AG04450 (cell line): ENCODE measurements at regions of chr1 and their contacts with region 1.

Region 1: DNA sequence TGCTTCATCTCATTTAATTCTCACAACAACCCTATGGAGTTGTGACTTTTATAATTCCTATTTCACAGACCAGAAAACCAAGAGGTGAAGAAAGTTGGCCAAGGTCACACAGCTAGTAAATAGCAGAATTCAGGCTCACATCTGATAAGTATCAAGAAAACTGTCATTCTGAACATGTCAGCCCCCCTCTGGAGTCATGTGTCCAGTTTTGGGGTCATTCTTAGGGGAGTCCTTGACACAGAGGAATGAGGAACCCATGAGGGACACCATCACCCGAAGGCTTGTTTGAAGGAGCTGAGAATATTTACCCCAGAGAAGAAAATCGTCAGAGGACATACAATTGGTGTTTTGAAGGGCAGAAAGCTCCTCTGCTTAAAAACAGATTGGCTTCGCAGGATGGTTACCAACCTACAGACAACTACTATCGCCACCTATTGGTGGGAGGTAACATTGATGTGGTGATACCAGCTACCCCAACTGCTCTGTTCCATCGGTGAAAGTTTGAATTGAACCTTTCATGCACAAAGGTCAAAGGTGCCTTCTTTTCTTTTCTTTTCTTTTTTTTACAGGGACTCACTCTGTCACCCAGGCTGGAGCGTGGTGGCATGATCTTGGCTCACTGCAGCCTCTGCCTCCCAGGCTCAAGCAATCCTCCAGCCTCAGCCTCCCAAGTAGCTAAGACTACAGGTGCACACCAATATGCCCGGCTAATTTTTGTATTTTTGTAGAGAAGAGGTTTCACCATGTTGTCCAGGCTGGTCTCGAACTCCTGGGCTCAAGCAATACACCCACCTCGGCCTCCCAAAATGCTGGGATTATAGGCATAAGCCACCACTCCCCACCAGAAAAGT is 31.3 kb downstream of the NCMAP start:
- DNase-seq: peak; percentile 6
- H3K4me3 ChIP-seq: no peak overlapping the region
- H3K27ac ChIP-seq: no peak overlapping the region
- H3K27me3 ChIP-seq: peaks cover 48% of the 10 kb centered on the region
- CTCF ChIP-seq: peak; percentile 80

Region 2: DNA sequence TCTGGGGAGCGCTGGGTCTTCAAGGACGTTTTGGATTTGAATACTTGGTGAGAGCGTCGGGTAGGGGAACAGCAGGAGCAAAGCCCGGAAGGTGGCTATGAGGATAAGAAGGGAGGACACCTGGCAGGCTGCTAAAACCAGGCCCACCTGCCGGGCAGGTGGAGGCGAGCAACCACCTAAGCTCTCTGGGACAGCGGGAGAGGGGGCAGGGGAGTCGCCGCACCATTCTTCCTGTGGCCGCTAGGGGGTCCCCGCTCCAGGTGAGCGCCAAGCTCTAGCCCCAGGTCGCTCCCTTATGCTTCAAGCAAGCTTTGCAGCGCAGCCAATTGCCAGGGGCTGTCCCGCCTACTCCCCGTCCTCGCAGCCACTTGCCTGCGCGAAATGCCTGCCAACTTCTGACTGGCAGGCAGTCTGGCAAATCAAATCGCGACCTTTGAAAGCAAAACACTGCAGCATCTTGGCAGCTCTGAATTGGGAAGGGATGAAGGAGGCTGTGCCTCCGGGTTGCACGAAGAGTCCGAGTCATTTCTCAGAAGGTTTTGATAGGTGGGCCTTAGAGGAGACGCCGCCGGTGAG is 171.8 kb before region 1 on chr1 and contains the start of gene NIPAL3:
- CTCF ChIA-PET with region 1: interaction called, 13 read pairs
- POLR2A ChIA-PET with region 1: no interaction called
- DNase-seq: peak; percentile 98
- H3K4me3 ChIP-seq: peak within 1 kb of the TSS; percentile 94
- H3K27ac ChIP-seq: peak within 1 kb of the TSS; percentile 94
- H3K27me3 ChIP-seq: no peaks in the 10 kb centered on the region
- CTCF ChIP-seq: peak; percentile 68
- polyA plus RNA-seq, gene NIPAL3: 46.5 and 48.5 TPM in 2 replicates

Region 3: DNA sequence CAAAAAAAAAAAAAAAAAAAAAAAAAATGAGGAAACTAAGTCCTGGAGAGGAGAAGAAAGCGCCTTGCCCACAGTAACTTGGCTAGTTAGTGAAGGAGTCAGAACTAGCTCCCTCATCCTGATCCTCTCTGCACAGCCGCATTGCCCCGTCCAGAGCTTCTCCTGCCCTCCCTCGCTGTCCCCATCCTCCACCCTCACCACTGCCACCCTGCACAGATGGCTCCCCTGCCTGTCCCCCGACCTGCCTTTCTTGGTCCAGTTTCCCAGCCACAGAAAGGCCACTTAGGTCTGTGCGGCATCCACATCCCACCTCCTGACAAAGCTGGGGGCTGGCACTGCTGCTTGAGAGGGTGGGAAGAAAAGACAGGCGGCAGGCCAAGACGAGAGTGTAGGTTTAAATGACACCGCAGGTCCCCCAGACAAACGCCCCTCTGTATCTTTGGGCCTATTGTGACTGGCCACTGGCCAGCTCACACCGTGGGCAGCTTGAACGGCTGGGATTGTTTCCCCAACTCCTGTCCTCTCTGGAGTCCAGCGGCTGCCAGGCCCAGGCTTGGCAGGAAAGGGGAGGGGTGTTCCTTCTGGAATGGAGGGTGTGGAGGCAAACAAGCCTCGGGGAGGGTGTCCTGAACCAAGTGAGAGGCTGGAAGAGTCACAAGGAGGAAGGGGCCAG is 11.1 kb before region 1 on chr1:
- CTCF ChIA-PET with region 1: interaction called, 21 read pairs
- POLR2A ChIA-PET with region 1: no interaction called
- DNase-seq: no peak
- H3K4me3 ChIP-seq: no peak overlapping the region
- H3K27ac ChIP-seq: no peak overlapping the region
- H3K27me3 ChIP-seq: peaks cover 13% of the 10 kb centered on the region
- CTCF ChIP-seq: no peak

Region 4: GRCh38 chr1:24609949-24610382 is 22.8 kb after region 1 on chr1:
- CTCF ChIA-PET with region 1: interaction called, 10 read pairs
- POLR2A ChIA-PET with region 1: no interaction called
- DNase-seq: no peak
- H3K4me3 ChIP-seq: no peak overlapping the region
- H3K27ac ChIP-seq: no peak overlapping the region
- H3K27me3 ChIP-seq: peaks cover 8% of the 10 kb centered on the region
- CTCF ChIP-seq: no peak

Region 5: GRCh38 chr1:24744911-24745710 is 157.9 kb after region 1 on chr1 and contains the start of gene CLIC4:
- CTCF ChIA-PET with region 1: no interaction called
- POLR2A ChIA-PET with region 1: no interaction called
- DNase-seq: peak; percentile 99
- H3K4me3 ChIP-seq: peak within 1 kb of the TSS; percentile 93
- H3K27ac ChIP-seq: peak within 1 kb of the TSS; percentile 92
- H3K27me3 ChIP-seq: no peaks in the 10 kb centered on the region
- CTCF ChIP-seq: peak; percentile 37; the same call in 1 of the 2 replicates
- polyA plus RNA-seq, gene CLIC4: 412 and 561 TPM in 2 replicates